MCF 10A (cell line): ENCODE measurements at regions of chr17 and their contacts with region 1.

Region 1: DNA sequence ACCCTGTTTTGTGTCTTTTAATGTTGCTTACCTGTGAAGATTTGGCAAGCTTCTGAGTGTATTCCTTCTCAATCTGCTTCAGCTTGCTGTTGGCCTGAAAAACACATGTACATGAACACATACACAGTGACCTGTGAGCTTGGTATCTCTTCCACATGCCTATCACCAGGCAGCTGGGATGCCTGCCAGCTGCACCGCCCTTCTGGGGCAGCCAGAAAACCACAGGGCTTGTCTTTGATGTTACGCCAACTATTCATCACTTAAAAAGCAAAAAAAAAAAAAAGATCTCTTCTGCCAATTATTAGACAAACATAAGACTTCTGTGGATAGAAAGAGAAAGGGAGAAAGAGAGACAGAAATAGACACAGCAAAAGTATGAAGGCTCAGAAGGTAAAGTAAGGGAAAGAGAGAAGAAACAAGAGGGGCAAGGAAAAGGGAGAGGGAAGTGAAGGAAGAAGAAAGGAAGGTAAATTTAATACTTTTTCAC is 189.2 kb upstream of the AXIN2 start:
- DNase-seq: peak; percentile 96
- H3K4me3 Mint-ChIP-seq: peak overlapping the region; percentile 0
- H3K27ac Mint-ChIP-seq: peak overlapping the region; percentile 2
- H3K4me1 Mint-ChIP-seq: peaks cover 13% of the 10 kb centered on the region
- H3K27me3 Mint-ChIP-seq: peaks cover 7% of the 10 kb centered on the region
- CTCF ChIP-seq: no peak

Region 2: GRCh38 chr17:65785109-65785508 is 34.4 kb after region 1 on chr17:
- CTCF ChIA-PET with region 1: no interaction called
- POLR2A ChIA-PET with region 1: interaction called, 15 read pairs
- intact Hi-C with region 1: loop called (anchors 1 kb)
- DNase-seq: peak; percentile 92
- H3K4me3 Mint-ChIP-seq: peak overlapping the region; percentile 15
- H3K27ac Mint-ChIP-seq: peak overlapping the region; percentile 69
- H3K4me1 Mint-ChIP-seq: peaks cover 15% of the 10 kb centered on the region
- H3K27me3 Mint-ChIP-seq: no peaks in the 10 kb centered on the region
- CTCF ChIP-seq: no peak

Region 3: GRCh38 chr17:65994679-65995078 is 244.0 kb after region 1 on chr17:
- CTCF ChIA-PET with region 1: no interaction called
- POLR2A ChIA-PET with region 1: no interaction called
- intact Hi-C with region 1: no loop called
- DNase-seq: no peak
- H3K4me3 Mint-ChIP-seq: no peak overlapping the region
- H3K27ac Mint-ChIP-seq: no peak overlapping the region
- H3K4me1 Mint-ChIP-seq: no peaks in the 10 kb centered on the region
- H3K27me3 Mint-ChIP-seq: no peaks in the 10 kb centered on the region
- CTCF ChIP-seq: no peak